GM12878 (cell line): ENCODE measurements at regions of chr5 and their contacts with region 1.

Region 1: GRCh38 chr5:74294231-74294705 is 346.3 kb downstream of the ENC1 start:
- DNase-seq: peak; percentile 82
- ATAC-seq: peak; percentile 85
- H3K4me3 ChIP-seq: no peak overlapping the region
- H3K27ac ChIP-seq: no peak overlapping the region
- H3K4me1 ChIP-seq: peaks cover 13% of the 10 kb centered on the region
- H3K27me3 ChIP-seq: no peaks in the 10 kb centered on the region
- CTCF ChIP-seq: no peak
- EP300 ChIP-seq: 0 out of 4 replicates have a peak, but pooled peaks have one; percentile 18 to 30
- POLR2A ChIP-seq: no peak
- RAD21 ChIP-seq: no peak

Region 2: GRCh38 chr5:74326571-74327338 is 32.5 kb after region 1 on chr5:
- CTCF ChIA-PET with region 1: no interaction called
- POLR2A ChIA-PET with region 1: interaction called, 3 read pairs
- RAD21 ChIA-PET with region 1: no interaction called
- SMC1A ChIA-PET with region 1: interaction called, 4 read pairs
- in situ Hi-C with region 1: no loop called
- intact Hi-C with region 1: loop called (anchors 2 kb)
- DNase-seq: peak; percentile 92
- ATAC-seq: peak; percentile 92
- H3K4me3 ChIP-seq: no peak overlapping the region
- H3K27ac ChIP-seq: no peak overlapping the region
- H3K4me1 ChIP-seq: peaks cover 13% of the 10 kb centered on the region
- H3K27me3 ChIP-seq: no peaks in the 10 kb centered on the region
- CTCF ChIP-seq: no peak
- EP300 ChIP-seq: peak; percentile 16 to 25; a peak in 2 of 4 replicates
- POLR2A ChIP-seq: no peak
- RAD21 ChIP-seq: no peak